HEK293 (cell line): ENCODE measurements at regions of chr17 and their contacts with region 1.

Region 1: GRCh38 chr17:50501054-50501453 is 7.2 kb upstream of the MYCBPAP start:
- H3K4me3 ChIP-seq: no peak overlapping the region
- H3K27ac ChIP-seq: no peak overlapping the region
- H3K4me1 ChIP-seq: no peaks in the 10 kb centered on the region
- CTCF ChIP-seq: no peak

Region 2: DNA sequence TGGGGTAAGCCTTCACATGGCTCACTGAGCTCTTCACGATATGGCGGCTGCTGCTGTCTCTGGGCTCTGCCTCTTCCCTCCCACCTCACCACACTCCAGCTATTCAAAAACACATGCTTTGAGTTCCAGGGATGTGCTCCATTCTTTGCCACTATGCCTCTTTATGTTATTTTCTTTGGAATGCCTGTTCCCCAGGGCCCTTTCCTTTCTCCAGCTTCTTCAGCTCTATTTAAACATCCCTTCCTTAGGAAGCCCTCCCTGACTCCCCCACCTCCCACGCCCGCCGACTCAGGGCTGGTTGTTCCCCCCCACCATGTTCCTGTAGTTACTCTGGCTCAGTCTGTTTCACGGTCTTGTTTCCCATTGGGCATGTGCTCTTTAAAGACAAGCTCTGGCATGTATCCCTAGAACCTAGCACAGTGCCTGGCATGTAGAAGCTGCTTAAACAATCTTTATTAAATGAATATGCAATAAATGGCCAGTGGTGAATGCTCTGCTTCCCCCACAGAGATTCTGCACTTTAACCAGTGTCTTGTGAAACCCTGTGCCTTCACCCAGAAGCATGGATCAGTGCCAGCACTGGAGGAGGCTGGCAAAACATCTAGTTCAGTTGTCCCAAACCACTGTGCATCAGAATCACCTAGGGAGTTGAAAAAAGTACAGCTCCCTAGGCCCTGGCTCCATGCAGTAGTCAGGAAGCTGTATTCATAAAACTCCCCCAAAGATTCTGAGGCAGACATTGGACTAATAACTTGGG is 14.1 kb after region 1 on chr17:
- CTCF ChIA-PET with region 1: interaction called, 16 read pairs
- POLR2A ChIA-PET with region 1: no interaction called
- H3K4me3 ChIP-seq: no peak overlapping the region
- H3K27ac ChIP-seq: no peak overlapping the region
- H3K4me1 ChIP-seq: no peaks in the 10 kb centered on the region
- CTCF ChIP-seq: no peak

Region 3: GRCh38 chr17:50541716-50542688 is 40.9 kb after region 1 on chr17:
- CTCF ChIA-PET with region 1: interaction called, 14 read pairs
- POLR2A ChIA-PET with region 1: no interaction called
- H3K4me3 ChIP-seq: peak overlapping the region; percentile 51
- H3K27ac ChIP-seq: peak overlapping the region; percentile 42; the same call in 1 of the 2 replicates
- H3K4me1 ChIP-seq: peaks cover 8% of the 10 kb centered on the region
- CTCF ChIP-seq: peak; percentile 90; the same call in 1 of the 2 replicates